ENCODE measurements at regions of chr3 and their contacts with region 1.

Region 1: GRCh38 chr3:55746808-55747413 is 259.8 kb upstream of the WNT5A start:
- DNase-seq: peak; percentile 18
- CTCF ChIP-seq: peak; percentile 38

Region 2: DNA sequence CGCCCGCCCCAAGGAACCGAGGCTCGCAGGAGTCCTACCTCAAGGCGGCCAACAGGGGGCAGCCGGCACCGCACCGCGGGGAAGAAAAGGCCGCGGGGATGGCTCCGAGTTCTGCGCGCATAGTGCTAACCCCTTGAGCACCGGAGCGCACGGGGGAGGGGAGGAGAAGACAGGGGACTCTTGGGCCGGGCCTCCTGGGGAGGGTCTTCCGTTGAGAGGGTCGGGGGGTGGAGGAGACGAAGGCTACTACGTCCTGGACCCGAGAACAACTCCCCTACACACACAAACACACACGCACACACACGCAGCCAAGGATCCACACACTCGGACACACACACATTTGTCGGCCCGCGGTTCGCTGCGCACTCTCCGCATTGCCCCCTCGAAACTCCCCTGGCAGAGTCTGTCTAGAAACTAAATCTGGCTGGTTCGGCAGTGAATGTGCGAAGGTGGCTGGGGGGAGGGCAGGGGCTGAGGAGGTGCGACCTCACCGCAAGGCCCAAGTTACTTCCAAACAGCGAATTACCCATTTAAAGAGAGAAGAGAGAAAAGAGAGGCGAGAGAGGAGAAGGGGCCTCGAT is 261.6 kb before region 1 on chr3:
- CTCF ChIA-PET with region 1: interaction called, 28 read pairs
- POLR2A ChIA-PET with region 1: no interaction called
- DNase-seq: peak; percentile 86
- CTCF ChIP-seq: peak; percentile 73

Region 3: DNA sequence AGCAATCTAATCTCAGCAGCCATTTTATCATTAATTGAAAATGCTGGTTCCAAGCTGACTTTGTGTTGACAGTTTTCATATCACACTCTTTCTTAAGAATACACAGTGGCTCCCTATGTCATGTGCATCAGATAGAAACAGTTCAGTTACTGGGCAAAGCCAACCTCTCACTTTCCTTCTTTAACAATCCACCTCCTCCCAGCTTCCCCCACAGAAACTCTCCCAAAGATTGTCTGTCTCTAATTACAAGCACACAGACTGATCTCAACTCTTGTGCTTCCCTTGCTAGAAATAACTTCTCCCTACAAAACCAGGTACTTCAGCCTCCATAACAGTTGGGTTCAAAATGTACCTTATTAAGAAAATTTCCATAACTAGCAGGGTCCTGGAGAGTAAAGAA is 30.9 kb before region 1 on chr3:
- CTCF ChIA-PET with region 1: interaction called, 10 read pairs
- POLR2A ChIA-PET with region 1: no interaction called
- DNase-seq: no peak
- CTCF ChIP-seq: no peak

Region 4: GRCh38 chr3:55731741-55732140 is 15.2 kb before region 1 on chr3:
- CTCF ChIA-PET with region 1: interaction called, 10 read pairs
- POLR2A ChIA-PET with region 1: no interaction called
- DNase-seq: no peak
- CTCF ChIP-seq: no peak

Region 5: GRCh38 chr3:56173601-56174000 is 426.7 kb after region 1 on chr3:
- CTCF ChIA-PET with region 1: no interaction called
- POLR2A ChIA-PET with region 1: no interaction called
- DNase-seq: no peak
- CTCF ChIP-seq: no peak

Measured in GM10248 (cell line).